ENCODE measurements at regions of chr19 and their contacts with region 1.

Region 1: DNA sequence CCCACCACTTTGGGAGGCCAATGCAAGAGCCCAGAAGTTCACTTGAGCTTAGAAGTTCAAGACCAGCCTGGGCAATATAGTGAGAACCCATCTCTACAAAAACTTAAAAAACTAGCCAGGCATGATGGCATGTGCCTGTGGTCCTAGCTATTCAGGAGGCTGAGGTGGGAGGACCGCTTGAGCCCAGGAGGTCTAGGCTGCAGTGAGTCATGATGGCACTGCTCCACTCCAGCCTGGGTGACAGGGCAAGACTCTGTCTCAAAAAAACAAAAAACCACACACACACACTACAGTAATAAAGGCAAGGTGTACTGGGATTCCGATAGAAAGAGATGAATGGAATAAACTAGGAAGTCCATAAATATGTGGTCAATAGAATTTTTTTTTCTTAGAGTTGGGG is 35.6 kb downstream of the CYP2F1 start:
- DNase-seq: no peak
- H3K4me3 ChIP-seq: no peak overlapping the region
- H3K27ac ChIP-seq: no peak overlapping the region
- H3K27me3 ChIP-seq: peaks cover 0 to 14% (median 0%) of the 10 kb centered on the region in 45 donors
- CTCF ChIP-seq: no peak

Region 2: GRCh38 chr19:40933034-40933433 is 216.8 kb before region 1 on chr19:
- intact Hi-C with region 1: no loop called
- DNase-seq: no peak
- H3K4me3 ChIP-seq: no peak overlapping the region
- H3K27ac ChIP-seq: no peak overlapping the region
- H3K27me3 ChIP-seq: peaks cover 0 to 4% (median 0%) of the 10 kb centered on the region in 45 donors
- CTCF ChIP-seq: no peak

Region 3: DNA sequence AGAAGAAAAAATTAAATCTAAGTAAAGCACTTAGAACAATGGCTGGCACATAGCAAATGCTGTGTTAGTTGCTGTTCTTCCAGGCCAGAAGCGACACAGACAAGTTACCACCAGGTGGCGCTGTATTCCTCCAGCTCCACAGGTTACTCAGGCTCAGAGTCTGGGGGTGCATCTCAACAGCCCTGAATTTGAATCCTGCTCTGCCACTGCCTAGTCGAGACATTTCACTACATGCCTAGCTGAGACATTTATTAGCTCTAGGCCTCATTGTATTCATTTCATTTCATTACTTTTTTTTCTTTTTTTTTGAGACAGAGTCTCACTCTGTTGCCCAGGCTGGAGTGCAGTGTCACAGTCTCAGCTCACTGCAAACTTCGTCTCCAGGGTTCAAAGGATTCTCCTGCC is 175.2 kb before region 1 on chr19:
- intact Hi-C with region 1: loop called in 1 of 2 experiments (anchors 5 kb)
- DNase-seq: peak; percentile 22 to 68 (median 54)
- H3K4me3 ChIP-seq: no peak overlapping the region
- H3K27ac ChIP-seq: no peak overlapping the region
- H3K27me3 ChIP-seq: peaks cover 0 to 28% (median 4%) of the 10 kb centered on the region in 45 donors
- CTCF ChIP-seq: peak; percentile 62 to 91 (median 83)

Region 4: DNA sequence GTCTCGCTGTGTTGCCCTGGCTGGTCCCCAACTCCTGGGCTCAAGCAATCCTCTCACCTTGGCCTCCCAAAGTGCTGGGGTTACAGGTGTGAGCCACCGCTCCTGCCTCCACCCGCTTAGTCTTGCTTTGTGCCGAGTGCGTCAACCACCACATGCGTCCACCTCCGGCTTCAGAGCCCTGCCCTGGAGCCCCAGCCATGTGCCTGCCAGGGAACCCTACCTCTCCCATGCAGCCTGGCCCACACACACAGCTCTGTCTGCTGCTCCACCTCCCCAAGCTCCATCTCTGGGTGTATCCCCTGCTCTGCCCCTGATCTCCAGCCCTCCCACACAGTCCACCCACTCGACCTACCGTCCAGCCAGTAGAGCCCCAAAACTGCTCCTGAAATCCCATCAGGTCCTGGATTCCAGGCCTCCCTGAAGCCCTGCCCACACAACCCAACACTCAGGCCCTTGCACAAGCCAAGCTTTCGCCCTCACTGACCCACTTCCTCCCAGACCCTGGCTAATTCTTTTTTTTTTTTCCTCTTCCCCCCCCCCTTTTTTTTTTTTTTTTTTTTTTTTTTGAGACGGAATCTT is 26.0 kb before region 1 on chr19:
- intact Hi-C with region 1: no loop called
- DNase-seq: no peak
- H3K4me3 ChIP-seq: no peak overlapping the region
- H3K27ac ChIP-seq: no peak overlapping the region
- H3K27me3 ChIP-seq: no peaks in the 10 kb centered on the region
- CTCF ChIP-seq: no peak

Region 5: GRCh38 chr19:41206926-41207750 is 57.3 kb after region 1 on chr19:
- intact Hi-C with region 1: no loop called
- DNase-seq: no peak
- H3K4me3 ChIP-seq: no peak overlapping the region
- H3K27ac ChIP-seq: peak overlapping the region in 5 of 59 donors; percentile 5 to 48 (median 15)
- H3K27me3 ChIP-seq: no peaks in the 10 kb centered on the region
- CTCF ChIP-seq: no peak

Measured in dorsolateral prefrontal cortex (tissue), 120 donors.